Body of pancreas (tissue), 4 donors: ENCODE measurements at regions of chr1 and their contacts with region 1.

Region 1: DNA sequence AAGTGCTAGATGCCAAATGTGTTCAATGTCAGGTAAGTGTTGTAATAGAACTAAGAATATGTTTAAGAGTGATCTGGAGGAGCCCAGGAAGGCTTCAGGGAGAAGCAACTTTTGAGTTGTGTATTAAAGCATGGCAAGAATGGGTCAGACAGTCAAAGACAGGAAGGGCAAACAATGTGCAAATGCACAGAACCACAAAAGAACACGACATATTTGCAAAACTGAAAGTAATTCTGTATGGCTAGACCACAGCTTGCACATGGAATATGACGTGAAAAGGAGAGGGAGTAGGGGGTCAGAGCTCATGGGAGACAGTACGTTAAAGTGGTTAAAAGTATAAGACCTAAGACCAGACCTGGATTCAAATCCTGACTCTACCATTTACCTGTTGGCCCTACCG is 7.1 kb upstream of the SORT1 start:
- DNase-seq: no peak
- ATAC-seq: no peak
- H3K4me3 ChIP-seq: no peak overlapping the region
- H3K27ac ChIP-seq: no peak overlapping the region
- H3K4me1 ChIP-seq: no peaks in the 10 kb centered on the region
- H3K27me3 ChIP-seq: no peaks in the 10 kb centered on the region
- CTCF ChIP-seq: no peak
- POLR2A ChIP-seq: no peak

Region 2: GRCh38 chr1:109277434-109278204 is 127.2 kb before region 1 on chr1:
- intact Hi-C with region 1: loop called (anchors 5 kb)
- DNase-seq: peak; percentile 87 to 92 (median 90)
- ATAC-seq: peak; percentile 84
- H3K4me3 ChIP-seq: no peak overlapping the region
- H3K27ac ChIP-seq: peak overlapping the region in 3 of 4 donors; percentile 32 to 64 (median 39)
- H3K4me1 ChIP-seq: peaks cover 44% of the 10 kb centered on the region
- H3K27me3 ChIP-seq: no peaks in the 10 kb centered on the region
- CTCF ChIP-seq: peak; percentile 68 to 96 (median 85)
- POLR2A ChIP-seq: peak in 2 of 3 donors; percentile 35 to 42